ENCODE measurements at regions of chr18 and their contacts with region 1.

Region 1: GRCh38 chr18:623761-624620 is 27.2 kb downstream of the CLUL1 start:
- DNase-seq: peak; percentile 64
- H3K4me3 ChIP-seq: no peak overlapping the region
- H3K27ac ChIP-seq: no peak overlapping the region
- H3K4me1 ChIP-seq: no peaks in the 10 kb centered on the region
- H3K27me3 ChIP-seq: peaks cover 0 to 2% of the 10 kb centered on the region in 2 experiments
- CTCF ChIP-seq: peak; percentile 55 to 78
- POLR2A ChIP-seq: no peak

Region 2: DNA sequence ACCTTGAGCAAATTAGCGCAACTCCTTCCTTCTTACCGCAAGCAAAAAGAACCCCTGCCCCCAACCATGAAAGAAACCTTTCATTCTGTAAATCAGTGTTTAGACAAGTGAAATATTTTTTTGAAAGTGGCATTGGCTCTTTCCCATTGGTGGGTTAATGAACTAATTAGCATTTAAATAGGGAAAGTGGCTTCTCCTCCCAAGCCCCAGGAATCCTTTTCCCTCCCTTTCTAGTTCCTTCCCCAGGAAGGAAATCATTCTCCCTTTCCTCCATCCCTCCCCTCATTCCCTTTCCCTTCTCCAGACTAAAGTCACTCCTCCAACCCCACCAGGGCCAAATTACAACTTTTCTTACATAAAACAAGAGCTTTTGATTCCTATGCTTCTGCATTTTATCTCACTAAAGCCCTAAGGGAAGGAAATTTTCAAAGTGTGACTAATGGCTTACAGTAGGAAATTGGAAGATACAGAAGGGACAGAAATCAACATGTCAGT is 10.6 kb after region 1 on chr18:
- CTCF ChIA-PET with region 1: interaction called, 19 read pairs
- POLR2A ChIA-PET with region 1: no interaction called
- dilution Hi-C with region 1: no loop called
- intact Hi-C with region 1: no loop called
- DNase-seq: peak; percentile 12
- H3K4me3 ChIP-seq: no peak overlapping the region
- H3K27ac ChIP-seq: no peak overlapping the region
- H3K4me1 ChIP-seq: peaks cover 5% of the 10 kb centered on the region
- H3K27me3 ChIP-seq: no peaks in the 10 kb centered on the region
- CTCF ChIP-seq: no peak
- POLR2A ChIP-seq: no peak

Region 3: DNA sequence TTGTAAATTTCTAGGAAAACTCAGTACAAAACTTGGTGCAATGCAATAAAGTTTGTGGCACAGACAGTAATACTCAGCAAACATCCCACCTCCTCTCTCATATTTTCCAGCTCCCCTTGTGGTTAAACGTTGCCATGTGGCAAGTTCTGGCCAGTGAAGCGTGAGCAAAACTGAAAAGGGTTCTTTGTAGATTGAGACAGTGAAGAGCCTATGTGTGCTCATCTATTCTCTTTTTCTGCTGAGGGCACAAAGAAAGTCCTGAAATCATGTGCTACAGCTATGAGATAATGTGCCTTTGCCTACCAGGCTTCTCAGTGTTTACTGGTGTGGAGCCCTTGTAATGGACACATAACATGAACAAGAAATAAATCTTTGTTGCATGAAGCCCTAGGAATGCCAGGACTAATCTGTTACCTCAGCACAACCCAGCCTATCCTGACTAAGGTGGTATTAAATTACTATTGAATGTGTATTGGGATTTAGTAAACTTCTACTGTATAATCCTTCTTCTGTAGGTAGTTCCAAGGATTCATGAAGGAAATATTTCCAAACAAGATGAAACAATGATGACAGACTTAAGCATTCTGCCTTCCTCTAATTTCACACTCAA is 20.5 kb after region 1 on chr18:
- CTCF ChIA-PET with region 1: interaction called, 12 read pairs
- POLR2A ChIA-PET with region 1: no interaction called
- dilution Hi-C with region 1: no loop called
- intact Hi-C with region 1: no loop called
- DNase-seq: no peak
- H3K4me3 ChIP-seq: no peak overlapping the region
- H3K27ac ChIP-seq: no peak overlapping the region
- H3K4me1 ChIP-seq: no peaks in the 10 kb centered on the region
- H3K27me3 ChIP-seq: no peaks in the 10 kb centered on the region
- CTCF ChIP-seq: no peak
- POLR2A ChIP-seq: no peak

Region 4: DNA sequence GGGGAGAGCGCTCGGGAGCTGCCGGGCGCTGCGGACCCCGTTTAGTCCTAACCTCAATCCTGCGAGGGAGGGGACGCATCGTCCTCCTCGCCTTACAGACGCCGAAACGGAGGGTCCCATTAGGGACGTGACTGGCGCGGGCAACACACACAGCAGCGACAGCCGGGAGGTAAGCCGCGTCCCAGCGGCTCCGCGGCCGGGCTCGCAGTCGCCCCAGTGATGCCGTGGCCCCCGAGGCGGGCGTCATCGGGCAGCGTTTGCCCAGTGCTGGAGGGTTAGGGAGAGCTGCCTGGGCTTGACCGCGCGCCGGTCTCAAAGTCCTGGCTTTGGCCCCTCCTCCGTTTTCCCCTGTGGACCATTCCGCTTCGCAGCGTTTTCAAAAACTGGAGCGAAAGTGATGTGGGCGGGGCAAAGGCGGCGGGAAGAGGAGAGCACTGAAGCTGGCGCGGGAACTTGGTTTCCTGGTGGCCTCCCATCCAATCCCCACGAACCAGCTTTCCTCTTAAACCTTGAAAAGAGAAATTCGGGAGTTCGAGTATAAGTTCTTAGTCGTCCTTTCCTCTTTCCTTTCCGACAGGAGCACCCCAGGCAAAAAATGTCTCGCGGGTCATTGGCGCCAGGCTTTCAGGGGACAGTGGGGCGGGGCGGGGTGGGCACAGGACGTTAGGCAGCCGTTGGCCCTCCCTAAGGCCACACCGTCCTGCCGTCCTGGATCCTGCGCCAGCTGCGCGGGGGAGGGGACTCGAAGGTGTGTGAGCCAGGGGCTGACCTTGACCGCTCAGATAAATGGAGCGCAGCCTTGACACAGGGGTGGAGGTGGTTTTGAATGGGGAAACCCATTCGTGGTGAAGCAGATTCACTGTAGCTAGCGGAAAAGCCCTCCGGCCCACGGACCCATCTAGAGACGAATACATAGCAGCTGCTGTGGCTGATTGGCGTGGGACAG is 34.3 kb after region 1 on chr18:
- CTCF ChIA-PET with region 1: interaction called, 12 read pairs
- POLR2A ChIA-PET with region 1: no interaction called
- dilution Hi-C with region 1: no loop called
- intact Hi-C with region 1: loop called (anchors 1 kb)
- DNase-seq: peak; percentile 93
- H3K4me3 ChIP-seq: peak overlapping the region; percentile 70 to 88 (median 82)
- H3K27ac ChIP-seq: peak overlapping the region; percentile 46
- H3K4me1 ChIP-seq: peaks cover 10% of the 10 kb centered on the region
- H3K27me3 ChIP-seq: no peaks in the 10 kb centered on the region
- CTCF ChIP-seq: no peak
- POLR2A ChIP-seq: peak; percentile 74

Region 5: DNA sequence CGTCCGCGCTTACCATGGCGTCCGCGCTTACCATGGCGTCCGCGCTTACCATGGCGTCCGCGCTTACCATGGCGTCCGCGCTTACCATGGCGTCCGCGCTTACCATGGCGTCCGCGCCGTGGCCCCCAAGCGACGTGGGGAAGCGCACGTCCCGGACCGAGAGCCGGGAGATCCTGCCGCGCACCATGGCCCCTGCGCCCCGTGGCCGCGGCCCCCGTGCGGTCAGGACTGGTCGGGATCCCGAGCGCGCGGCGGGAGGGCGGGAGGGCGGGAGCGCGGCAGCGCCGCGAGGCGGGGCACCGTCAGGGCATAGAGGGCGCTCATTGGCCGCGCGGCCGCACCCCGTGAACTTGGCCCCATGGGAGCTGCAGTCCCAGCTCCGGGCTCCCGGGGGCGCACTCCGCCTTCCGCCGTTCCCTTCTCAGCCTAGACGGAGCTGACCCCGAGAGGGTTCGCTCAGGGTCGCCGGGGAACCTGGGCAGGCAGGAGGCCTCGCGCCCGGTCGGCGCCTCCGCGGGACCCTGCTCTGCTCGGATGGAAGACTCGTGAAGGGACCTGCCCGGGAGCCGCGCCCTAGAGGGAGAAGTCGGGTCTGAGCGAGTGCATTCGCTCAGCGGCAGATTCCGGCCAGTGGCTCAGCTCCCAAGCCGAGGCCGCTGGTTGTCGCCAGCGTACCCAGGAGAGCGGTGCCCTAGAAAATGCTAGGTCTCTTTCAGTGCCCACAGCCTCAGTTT is 88.6 kb after region 1 on chr18 and contains the start of gene ENOSF1:
- CTCF ChIA-PET with region 1: interaction called, 11 read pairs
- POLR2A ChIA-PET with region 1: no interaction called
- dilution Hi-C with region 1: no loop called
- intact Hi-C with region 1: loop called (anchors 1 kb)
- DNase-seq: peak; percentile 84
- H3K4me3 ChIP-seq: peak within 1 kb of the TSS; percentile 74 to 84 (median 82)
- H3K27ac ChIP-seq: peak within 1 kb of the TSS; percentile 49
- H3K4me1 ChIP-seq: peaks cover 5% of the 10 kb centered on the region
- H3K27me3 ChIP-seq: no peaks in the 10 kb centered on the region
- CTCF ChIP-seq: peak; percentile 72 to 92
- POLR2A ChIP-seq: peak; percentile 51
- total RNA-seq, gene ENOSF1: 50.5 and 52.5 TPM in 2 replicates

Region 6: GRCh38 chr18:741931-742512 is 118.0 kb after region 1 on chr18:
- CTCF ChIA-PET with region 1: interaction called, 10 read pairs
- POLR2A ChIA-PET with region 1: no interaction called
- dilution Hi-C with region 1: no loop called
- intact Hi-C with region 1: loop called (anchors 2 kb)
- DNase-seq: peak; percentile 78
- H3K4me3 ChIP-seq: no peak overlapping the region
- H3K27ac ChIP-seq: peak overlapping the region; percentile 9
- H3K4me1 ChIP-seq: peaks cover 19% of the 10 kb centered on the region
- H3K27me3 ChIP-seq: no peaks in the 10 kb centered on the region
- CTCF ChIP-seq: peak; percentile 46 to 51
- POLR2A ChIP-seq: no peak

Region 7: DNA sequence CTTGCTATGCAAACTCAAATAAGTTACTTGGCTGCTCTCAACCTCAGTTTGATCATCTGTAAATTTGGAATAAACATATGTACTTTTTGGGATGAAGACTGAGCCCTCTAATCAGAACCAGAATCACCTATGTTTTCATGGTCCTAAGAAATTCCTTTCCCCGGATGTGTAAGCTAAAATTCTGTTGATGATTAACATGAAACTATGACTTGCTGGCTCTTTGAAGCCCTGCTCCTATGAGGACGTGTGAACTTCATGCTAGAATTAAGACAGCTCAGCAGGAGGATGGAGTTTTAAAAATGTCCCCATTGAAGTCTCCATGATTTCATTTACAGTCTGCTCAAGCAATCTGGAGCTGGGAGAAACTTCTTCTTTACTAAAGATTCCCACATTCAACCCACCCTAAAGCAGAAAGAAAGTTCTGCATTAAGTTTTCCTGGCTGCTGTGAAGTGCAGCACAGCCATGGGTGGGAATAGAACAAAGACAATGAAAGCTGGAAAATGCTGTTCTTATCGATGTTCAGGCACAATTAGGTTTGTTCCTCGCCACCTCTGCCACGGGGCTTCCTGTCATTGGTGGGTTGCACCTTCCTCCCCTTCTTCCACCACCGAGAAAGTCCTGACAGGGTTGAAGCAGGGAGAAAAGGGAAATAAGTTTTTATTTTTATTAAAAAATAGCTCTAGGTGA is 331.5 kb after region 1 on chr18:
- CTCF ChIA-PET with region 1: no interaction called
- POLR2A ChIA-PET with region 1: no interaction called
- dilution Hi-C with region 1: no loop called
- intact Hi-C with region 1: no loop called
- DNase-seq: no peak
- H3K4me3 ChIP-seq: no peak overlapping the region
- H3K27ac ChIP-seq: no peak overlapping the region
- H3K4me1 ChIP-seq: no peaks in the 10 kb centered on the region
- H3K27me3 ChIP-seq: peaks cover 2% of the 10 kb centered on the region in 2 experiments
- CTCF ChIP-seq: no peak
- POLR2A ChIP-seq: no peak